IMR-90 (cell line): ENCODE measurements at regions of chr11 and their contacts with region 1.

Region 1: DNA sequence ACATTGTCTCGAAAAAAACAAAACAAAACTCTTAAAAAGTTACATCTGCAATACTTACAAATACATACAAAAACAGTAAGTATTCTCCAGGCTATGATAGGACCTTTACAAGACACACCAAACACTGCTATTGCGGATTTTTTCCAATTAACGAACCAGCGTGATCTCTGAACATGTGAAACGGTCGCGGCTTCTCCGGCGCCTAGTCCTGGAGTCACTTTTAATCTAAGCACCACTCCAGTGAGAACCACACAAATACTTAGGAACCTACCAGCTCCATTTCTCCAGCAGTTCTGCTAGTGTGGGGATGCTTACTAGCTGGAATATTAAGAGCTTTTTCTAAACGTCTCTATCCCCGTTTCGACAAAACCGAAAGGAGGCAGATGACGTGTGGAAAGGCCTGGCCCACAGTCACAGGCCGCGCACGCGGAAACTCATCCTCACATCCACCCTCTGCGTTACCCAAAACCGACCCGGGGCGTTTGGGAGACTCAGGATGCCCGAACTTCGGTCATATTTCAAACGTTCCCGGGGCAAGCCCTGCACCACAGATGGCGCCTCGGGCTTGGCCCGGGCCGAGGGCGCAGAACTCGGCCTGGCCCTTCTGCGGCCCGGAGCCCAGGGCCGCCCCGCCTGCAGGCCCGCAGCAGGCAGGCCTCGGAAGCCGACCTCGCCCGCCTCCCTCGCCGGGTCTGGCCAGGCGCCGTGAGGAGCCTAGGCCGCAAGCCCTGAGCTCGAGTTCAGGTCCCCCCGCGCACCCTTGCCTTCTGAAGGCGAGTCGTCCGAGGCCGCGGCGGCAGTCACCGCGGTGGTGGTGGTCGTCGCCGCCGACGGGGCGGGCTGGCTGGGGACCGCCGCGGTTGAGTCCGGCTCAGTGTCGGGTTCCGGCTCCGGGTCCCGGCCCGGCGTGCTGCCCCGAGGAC is 575 bp downstream of the FNBP4 start:
- DNase-seq: peak; percentile 66
- ATAC-seq: peak; percentile 9
- H3K4me3 ChIP-seq: peak overlapping the region; percentile 65
- H3K27ac ChIP-seq: peak overlapping the region; percentile 92
- H3K4me1 ChIP-seq: 0 out of 2 replicates have a peak, but pooled peaks cover 1% of the 10 kb centered on the region
- H3K27me3 ChIP-seq: no peaks in the 10 kb centered on the region
- CTCF ChIP-seq: no peak
- POLR2A ChIP-seq: no peak
- RAD21 ChIP-seq: no peak

Region 2: DNA sequence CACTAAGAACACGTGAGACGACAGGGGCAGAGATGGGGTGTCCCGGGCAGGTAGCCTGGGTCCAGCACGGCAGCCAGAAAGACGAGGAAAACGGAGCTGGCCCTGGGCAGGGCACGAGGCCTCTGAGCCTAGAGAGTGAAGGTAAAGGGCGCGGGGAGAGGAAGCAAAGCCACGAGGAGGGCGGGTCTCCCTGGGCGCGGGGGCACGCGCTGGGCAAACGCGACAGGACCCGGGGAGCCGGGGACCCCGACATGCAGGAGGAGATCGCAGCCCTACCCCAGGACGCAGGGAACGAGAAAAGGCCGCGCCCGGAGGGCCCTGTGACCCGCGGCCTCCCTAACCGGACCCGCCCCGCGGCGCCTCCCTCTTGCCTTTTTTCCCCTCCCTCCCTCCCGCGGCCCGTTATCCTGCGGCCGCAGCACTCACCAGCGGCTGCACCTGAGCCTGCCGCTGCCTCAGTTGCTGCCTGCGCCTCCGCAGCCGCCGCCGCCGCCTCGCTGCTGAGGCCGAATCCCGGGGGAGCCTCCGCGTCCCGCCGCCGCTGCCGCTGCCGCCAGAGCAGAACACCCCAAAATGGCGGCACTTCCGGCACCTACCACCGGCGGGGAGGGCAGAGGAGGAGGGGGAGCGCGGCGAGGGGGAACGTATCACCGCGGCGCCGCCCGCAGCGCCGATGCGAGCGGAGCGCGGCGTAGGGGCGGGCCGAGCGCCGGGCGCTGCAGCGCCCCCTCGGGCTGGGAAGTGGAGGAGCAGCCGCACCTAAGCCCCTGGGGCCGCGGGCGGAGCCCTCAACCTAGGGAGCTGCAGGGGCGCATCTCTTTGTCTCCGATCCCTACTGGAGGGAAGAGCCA is 213.8 kb before region 1 on chr11 and contains the start of gene CELF1:
- CTCF ChIA-PET with region 1: no interaction called
- POLR2A ChIA-PET with region 1: no interaction called
- dilution Hi-C with region 1: no loop called
- in situ Hi-C with region 1: no loop called
- intact Hi-C with region 1: no loop called
- DNase-seq: peak; percentile 83
- ATAC-seq: peak; percentile 98
- H3K4me3 ChIP-seq: peak within 1 kb of the TSS; percentile 99
- H3K27ac ChIP-seq: peak within 1 kb of the TSS; percentile 93
- H3K4me1 ChIP-seq: peaks cover 3% of the 10 kb centered on the region
- H3K27me3 ChIP-seq: no peaks in the 10 kb centered on the region
- CTCF ChIP-seq: peak; percentile 96
- POLR2A ChIP-seq: peak; percentile 43; the same call in 1 of the 2 replicates
- RAD21 ChIP-seq: peak; percentile 72
- total RNA-seq, gene CELF1: 109 and 135 TPM in 2 replicates

Region 3: DNA sequence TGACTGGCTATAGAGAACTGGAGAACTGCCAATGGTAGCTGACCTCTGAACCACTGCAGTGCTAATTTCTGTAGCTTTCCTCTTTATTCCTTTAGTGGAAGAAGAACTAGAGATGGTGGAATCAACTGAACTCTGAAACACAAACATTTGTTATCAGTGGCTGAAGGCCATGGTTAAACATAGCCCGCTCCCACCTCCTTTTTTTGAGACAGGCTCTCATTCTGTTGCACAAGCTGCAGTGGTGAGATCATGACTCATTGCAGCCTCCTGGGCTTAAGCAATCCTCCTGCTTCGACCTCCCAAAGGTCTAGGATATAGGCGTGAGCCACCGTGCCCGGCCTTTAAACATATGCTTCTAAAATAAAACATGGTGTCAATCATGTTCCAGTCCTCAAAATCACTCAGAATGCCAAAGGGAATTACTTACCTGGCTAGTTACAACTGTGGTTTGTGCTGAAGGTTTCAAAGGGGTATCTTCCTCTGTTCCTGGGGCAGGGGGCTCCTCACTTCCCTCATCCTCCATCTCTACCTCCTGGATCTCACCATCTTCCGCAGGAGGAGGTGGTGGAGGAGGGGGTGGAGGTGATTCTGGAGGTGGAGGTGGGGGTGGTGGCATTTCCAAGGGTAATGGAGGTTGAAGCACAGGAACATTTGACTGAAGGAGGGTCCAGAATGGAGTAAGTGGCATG is 42.4 kb before region 1 on chr11:
- CTCF ChIA-PET with region 1: interaction called, 3 read pairs
- POLR2A ChIA-PET with region 1: interaction called, 13 read pairs
- dilution Hi-C with region 1: no loop called
- in situ Hi-C with region 1: no loop called
- intact Hi-C with region 1: loop called (anchors 5 kb)
- DNase-seq: peak; percentile 89
- ATAC-seq: peak; percentile 83
- H3K4me3 ChIP-seq: no peak overlapping the region
- H3K27ac ChIP-seq: peak overlapping the region; percentile 67; the same call in 1 of the 2 replicates
- H3K4me1 ChIP-seq: peaks cover 2% of the 10 kb centered on the region; the same call in 1 of the 2 replicates
- H3K27me3 ChIP-seq: no peaks in the 10 kb centered on the region
- CTCF ChIP-seq: no peak
- POLR2A ChIP-seq: no peak
- RAD21 ChIP-seq: no peak

Region 4: DNA sequence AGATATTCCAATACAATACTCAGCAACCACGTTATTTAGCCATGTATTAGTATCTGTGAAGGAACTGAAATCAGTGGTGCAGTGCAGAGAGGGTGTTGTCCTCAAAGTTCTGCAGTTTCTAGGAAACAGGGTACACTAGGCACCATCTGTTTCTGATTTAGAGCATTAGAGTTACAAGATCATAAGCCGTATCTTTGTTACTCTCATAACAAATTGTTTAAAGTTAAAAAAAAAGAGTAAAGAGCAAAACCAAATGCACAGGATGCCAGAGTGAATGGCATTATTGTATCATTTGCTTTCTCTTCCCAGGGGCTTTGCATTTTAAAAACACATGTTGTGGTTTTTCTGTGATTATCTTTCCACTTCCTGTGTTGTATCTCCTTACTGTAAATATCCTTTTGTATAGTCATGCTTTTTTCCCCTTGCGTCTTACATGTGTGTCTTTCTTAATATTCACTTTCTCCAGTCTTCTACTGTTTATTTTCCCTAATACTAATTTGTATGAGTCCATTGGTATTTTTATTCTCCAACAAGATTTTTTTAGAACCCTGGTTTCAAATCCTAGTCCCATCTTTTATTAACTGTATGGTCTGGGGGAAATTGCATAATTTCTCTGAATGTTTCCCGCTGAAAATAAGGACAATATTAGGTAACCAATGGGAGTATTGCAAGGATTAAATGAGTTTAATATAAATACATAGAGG is 96.8 kb after region 1 on chr11:
- CTCF ChIA-PET with region 1: no interaction called
- POLR2A ChIA-PET with region 1: no interaction called
- dilution Hi-C with region 1: no loop called
- in situ Hi-C with region 1: no loop called
- intact Hi-C with region 1: no loop called
- DNase-seq: peak; percentile 92
- ATAC-seq: peak; percentile 78
- H3K4me3 ChIP-seq: no peak overlapping the region
- H3K27ac ChIP-seq: peak overlapping the region; percentile 31; the same call in 1 of the 2 replicates
- H3K4me1 ChIP-seq: peaks cover 5% of the 10 kb centered on the region
- H3K27me3 ChIP-seq: no peaks in the 10 kb centered on the region
- CTCF ChIP-seq: no peak
- POLR2A ChIP-seq: no peak
- RAD21 ChIP-seq: no peak

Region 5: DNA sequence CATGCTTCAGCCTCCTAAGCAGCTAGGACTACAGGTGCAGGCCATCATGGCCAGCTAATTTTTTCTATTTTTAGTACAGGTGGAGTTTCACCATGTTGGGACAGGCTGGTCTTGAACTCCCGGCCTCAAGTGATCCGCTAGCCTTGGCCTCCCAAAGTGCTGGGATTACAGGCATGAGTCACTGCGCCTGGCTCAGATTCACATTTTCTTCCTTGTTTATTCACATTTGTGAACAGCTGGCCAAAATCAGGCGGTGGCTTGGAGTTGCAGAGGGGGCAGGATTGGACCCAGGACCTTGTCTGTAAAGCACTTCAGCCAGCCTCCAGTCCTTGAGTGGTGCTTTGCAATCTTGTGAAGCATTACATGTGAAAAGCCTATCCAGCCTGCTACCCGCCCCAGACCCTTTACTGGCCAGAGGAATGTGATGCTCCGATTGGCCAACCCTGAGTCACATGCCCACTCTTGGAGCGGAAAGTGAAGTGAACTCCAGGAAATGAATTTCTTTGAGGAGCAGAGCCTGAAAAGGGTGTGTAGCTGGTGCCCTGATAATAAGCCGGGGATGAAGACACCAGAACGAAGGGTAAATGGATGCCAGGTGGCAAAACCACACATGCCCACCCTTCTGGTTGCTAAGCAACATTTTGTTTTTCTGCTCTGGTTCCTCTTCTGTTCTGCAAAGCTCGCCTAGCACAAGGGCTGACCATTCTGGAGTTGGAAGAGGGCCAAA is 151.2 kb after region 1 on chr11:
- CTCF ChIA-PET with region 1: no interaction called
- POLR2A ChIA-PET with region 1: no interaction called
- dilution Hi-C with region 1: no loop called
- in situ Hi-C with region 1: no loop called
- intact Hi-C with region 1: loop called (anchors 5 kb)
- DNase-seq: peak; percentile 98
- ATAC-seq: peak; percentile 98
- H3K4me3 ChIP-seq: peak overlapping the region; percentile 6; the same call in 1 of the 2 replicates
- H3K27ac ChIP-seq: peak overlapping the region; percentile 74; the same call in 1 of the 2 replicates
- H3K4me1 ChIP-seq: peaks cover 11% of the 10 kb centered on the region
- H3K27me3 ChIP-seq: no peaks in the 10 kb centered on the region
- CTCF ChIP-seq: no peak
- POLR2A ChIP-seq: no peak
- RAD21 ChIP-seq: no peak